Activated CD4-positive, alpha-beta T cell treated with anti-CD3 and anti-CD28 coated beads, Interleukin-2, amount 10 ng/mL, durations not matched to agents 7 days and 5 days (primary cell): ENCODE measurements at regions of chr11 and their contacts with region 1.

Region 1: GRCh38 chr11:126293726-126294125 is 10.1 kb upstream of the DCPS start:
- DNase-seq: no peak
- H3K4me3 Mint-ChIP-seq: no peak overlapping the region
- H3K27ac Mint-ChIP-seq: peak overlapping the region; percentile 36
- H3K4me1 Mint-ChIP-seq: peaks cover 2% of the 10 kb centered on the region
- H3K27me3 Mint-ChIP-seq: no peaks in the 10 kb centered on the region

Region 2: GRCh38 chr11:126282736-126283591 is 10.8 kb before region 1 on chr11 and contains the start of gene TIRAP:
- CTCF ChIA-PET with region 1: interaction called, 14 read pairs
- POLR2A ChIA-PET with region 1: no interaction called
- DNase-seq: peak; percentile 72
- H3K4me3 Mint-ChIP-seq: peak within 1 kb of the TSS; percentile 88
- H3K27ac Mint-ChIP-seq: peak within 1 kb of the TSS; percentile 95
- H3K4me1 Mint-ChIP-seq: peaks cover 47% of the 10 kb centered on the region
- H3K27me3 Mint-ChIP-seq: no peaks in the 10 kb centered on the region
- total RNA-seq, gene TIRAP: 13.5 to 14.0 TPM

Region 3: GRCh38 chr11:126303623-126304456 is 10.1 kb after region 1 on chr11 and contains the start of gene DCPS:
- CTCF ChIA-PET with region 1: interaction called, 10 read pairs
- POLR2A ChIA-PET with region 1: no interaction called
- DNase-seq: peak; percentile 86
- H3K4me3 Mint-ChIP-seq: peak within 1 kb of the TSS; percentile 77
- H3K27ac Mint-ChIP-seq: peak within 1 kb of the TSS; percentile 83
- H3K4me1 Mint-ChIP-seq: peaks cover 32% of the 10 kb centered on the region
- H3K27me3 Mint-ChIP-seq: no peaks in the 10 kb centered on the region
- total RNA-seq, gene DCPS: 33.1 to 33.5 TPM